Stomach (tissue), 19 donors: ENCODE measurements at regions of chr1 and their contacts with region 1.

Region 1: DNA sequence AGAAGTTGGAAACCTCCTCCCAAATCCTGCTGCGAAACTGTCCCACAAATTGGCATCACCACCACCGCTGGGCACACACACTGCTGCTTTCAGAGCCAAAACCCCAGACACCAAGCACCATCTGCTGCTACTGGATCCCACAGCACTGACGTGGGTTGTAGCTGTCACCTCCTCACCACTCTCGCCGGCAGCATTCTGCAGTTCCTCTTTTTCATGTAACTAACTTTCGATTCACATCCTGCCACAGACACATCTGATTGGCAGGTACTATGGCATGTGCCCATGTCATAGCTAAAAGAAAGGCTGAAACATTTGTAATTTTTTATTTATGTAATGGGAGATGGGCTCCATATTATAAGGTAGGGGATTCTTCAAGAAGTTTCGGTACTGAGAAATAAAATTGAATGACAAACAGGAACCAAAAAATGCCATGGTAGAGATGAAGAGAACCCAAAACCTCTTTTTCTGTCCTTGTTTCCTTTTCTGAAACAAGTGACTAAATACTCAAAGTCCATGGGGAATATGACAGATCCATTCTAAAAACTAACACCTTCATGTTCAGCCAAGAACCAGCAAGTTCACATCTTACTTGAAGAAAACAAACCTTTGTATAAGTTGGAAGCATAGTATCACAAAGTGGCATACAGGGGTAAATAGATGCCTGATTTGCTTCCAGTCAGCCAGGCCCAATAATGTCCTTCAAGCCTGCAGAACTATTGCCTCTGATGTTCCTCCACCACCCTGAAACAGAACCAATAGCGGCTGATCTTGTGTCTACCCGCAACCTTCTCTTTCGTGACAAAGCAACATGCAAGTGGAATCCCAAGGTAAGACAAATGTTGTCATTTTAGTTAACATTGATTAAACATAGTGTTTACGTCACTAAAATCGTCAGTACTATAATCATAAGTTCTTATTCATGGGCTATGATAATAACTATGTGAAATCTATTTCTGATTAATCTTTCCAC is 26.6 kb upstream of the RGS13 start:
- DNase-seq: peak; percentile 60 to 72
- H3K4me3 ChIP-seq: no peak overlapping the region
- H3K27ac ChIP-seq: no peak overlapping the region
- H3K4me1 ChIP-seq: peaks cover 0 to 14% (median 0%) of the 10 kb centered on the region in 4 donors
- H3K27me3 ChIP-seq: no peaks in the 10 kb centered on the region
- CTCF ChIP-seq: no peak
- EP300 ChIP-seq: no peak
- POLR2A ChIP-seq: no peak

Region 2: DNA sequence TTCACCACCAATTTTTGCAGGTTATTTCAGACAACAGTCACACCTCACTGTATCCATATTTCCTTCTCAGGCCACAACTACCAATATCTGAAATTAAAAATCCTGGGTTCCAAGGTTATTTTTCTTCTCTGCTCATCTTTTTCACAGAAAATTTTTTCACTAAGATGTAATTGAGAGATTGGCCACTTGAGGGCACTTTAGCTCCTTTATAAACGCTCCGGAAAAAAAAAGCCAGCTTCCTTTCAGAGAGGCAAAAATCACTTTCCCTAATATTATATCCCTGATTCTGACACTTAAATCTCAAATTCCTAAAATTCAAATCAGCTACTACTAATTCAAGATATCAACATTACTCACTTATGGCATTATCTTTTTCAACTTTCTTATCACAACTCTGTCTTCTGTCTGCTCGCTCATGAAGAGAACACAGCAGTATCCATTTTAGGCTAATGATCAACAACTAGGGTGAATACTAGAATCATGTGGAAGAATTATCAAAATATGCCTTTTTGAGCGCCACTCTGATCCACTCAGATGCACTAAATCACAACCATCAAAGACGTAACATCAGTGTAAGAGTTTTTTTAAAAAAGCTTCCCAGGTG is 135.2 kb before region 1 on chr1:
- intact Hi-C with region 1: loop called (anchors 5 kb)
- DNase-seq: peak in 1 of 2 donors; percentile 59
- H3K4me3 ChIP-seq: no peak overlapping the region
- H3K27ac ChIP-seq: no peak overlapping the region
- H3K4me1 ChIP-seq: peaks cover 0 to 14% (median 2%) of the 10 kb centered on the region in 4 donors
- H3K27me3 ChIP-seq: no peaks in the 10 kb centered on the region
- CTCF ChIP-seq: peak in 5 of 7 experiments; percentile 47 to 61 (median 54)
- EP300 ChIP-seq: no peak
- POLR2A ChIP-seq: no peak